ENCODE measurements at regions of chr16 and their contacts with region 1.

Region 1: GRCh38 chr16:9090960-9091866 is at the start of gene HAPSTR1:
- DNase-seq: peak; percentile 97 to 100 (median 100)
- H3K4me3 ChIP-seq: peak within 1 kb of the TSS; percentile 69 to 98
- H3K4me3 Mint-ChIP-seq: peak within 1 kb of the TSS; percentile 96 to 100 (median 99)
- H3K27ac ChIP-seq: peak within 1 kb of the TSS; percentile 93
- H3K27ac Mint-ChIP-seq: peak within 1 kb of the TSS; percentile 96 to 99 (median 98)
- H3K4me1 ChIP-seq: peaks cover 43% of the 10 kb centered on the region
- H3K4me1 Mint-ChIP-seq: peaks cover 30 to 53% (median 35%) of the 10 kb centered on the region in 4 donors
- H3K27me3 ChIP-seq: no peaks in the 10 kb centered on the region
- H3K27me3 Mint-ChIP-seq: no peaks in the 10 kb centered on the region
- total RNA-seq, gene HAPSTR1: 89.6 to 90.5 TPM

Region 2: DNA sequence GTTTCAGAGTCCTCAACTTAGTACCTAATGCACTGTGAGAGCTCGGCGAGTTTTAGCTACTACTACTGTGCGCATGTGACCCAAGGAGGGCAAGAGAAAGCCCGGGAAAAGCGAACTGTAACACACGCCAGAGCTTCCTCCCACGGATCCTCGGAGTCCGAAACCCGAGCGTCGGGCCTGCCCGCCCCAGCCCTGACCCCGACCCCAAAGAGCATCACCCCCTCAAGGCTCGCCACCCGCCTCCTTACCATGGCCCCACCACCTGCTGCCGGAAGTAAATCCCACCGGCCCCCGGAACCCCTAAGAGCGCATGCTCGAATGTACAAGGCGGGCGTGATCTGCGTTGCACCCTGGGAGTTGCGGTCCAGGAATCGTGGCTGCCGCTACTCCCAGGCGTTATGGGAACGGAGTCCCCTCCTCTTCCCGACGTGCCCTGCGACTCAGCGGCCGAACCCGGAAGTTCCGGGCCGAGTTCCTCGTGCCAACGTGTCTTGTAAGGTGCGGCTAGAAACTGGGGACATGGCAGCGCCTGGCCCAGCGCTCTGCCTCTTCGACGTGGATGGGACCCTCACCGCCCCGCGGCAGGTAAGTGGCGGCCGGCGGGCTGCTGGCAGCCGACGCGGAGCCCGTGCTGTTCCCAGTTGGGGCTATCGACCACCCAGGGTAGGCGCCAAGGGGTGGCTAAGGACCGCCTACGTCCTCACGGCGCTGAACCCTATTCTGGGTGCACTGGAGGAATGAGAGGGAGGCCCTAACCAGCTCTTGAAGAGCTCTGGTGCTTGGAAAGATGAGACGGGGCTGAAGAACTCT is 293.6 kb before region 1 on chr16 and contains the starts of genes PMM2 and TMEM186:
- CTCF ChIA-PET with region 1: no interaction called
- POLR2A ChIA-PET with region 1: interaction called, 14 read pairs
- intact Hi-C with region 1: loop called (anchors 1 kb)
- DNase-seq: peak; percentile 93 to 97 (median 94)
- H3K4me3 ChIP-seq: peak within 1 kb of the TSS; percentile 73 to 97
- H3K4me3 Mint-ChIP-seq: peak within 1 kb of the TSS; percentile 93 to 98 (median 95)
- H3K27ac ChIP-seq: peak within 1 kb of the TSS; percentile 81
- H3K27ac Mint-ChIP-seq: peak within 1 kb of the TSS; percentile 88 to 97 (median 94)
- H3K4me1 ChIP-seq: peaks cover 44% of the 10 kb centered on the region
- H3K4me1 Mint-ChIP-seq: peaks cover 24 to 55% (median 33%) of the 10 kb centered on the region in 4 donors
- H3K27me3 ChIP-seq: no peaks in the 10 kb centered on the region
- H3K27me3 Mint-ChIP-seq: no peaks in the 10 kb centered on the region
- total RNA-seq, gene PMM2: 51.7 to 61.7 TPM
- total RNA-seq, gene TMEM186: 15.6 to 17.9 TPM

Region 3: DNA sequence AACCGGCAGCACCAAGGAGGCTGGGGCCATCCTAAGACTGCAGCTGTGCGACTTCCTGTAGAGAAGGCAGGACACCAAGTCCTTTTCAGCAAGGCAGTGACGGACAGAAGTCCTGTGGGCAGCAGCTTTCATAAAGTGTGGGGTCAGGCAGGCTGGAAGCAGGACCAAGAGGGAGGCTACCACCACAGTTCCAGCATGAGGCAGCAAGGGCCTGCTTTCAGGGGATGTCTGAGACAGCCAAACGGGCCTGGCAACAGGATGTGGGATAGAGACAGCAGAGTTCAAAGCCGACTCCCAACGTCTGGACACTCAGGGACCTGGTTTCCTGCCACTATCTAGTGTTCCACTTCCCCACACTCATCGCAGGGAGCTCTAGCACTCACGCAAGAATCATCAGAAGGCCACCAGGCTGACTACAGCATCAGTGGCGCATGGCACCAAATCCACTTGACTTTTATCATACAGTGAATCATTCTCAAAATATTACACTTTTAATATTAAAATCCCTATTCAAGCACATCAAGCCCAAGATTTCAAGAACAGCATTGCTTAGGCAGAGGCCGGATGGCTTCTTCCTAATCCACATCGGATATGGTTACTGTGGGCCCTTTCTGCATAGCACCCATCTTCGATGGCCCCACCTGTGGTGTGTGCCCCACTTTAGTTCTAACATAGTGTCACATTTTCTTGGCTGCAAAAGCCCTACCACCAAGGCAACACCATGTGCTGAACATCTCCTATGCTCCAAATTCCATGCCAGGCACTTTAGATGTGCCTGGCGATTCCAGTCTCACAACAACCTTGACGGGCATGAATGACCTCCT is 132.7 kb before region 1 on chr16:
- CTCF ChIA-PET with region 1: no interaction called
- POLR2A ChIA-PET with region 1: interaction called, 21 read pairs
- intact Hi-C with region 1: no loop called
- DNase-seq: peak in 2 of 5 donors; percentile 32 to 59
- H3K4me3 ChIP-seq: peak overlapping the region; percentile 12 to 21
- H3K4me3 Mint-ChIP-seq: peak overlapping the region; percentile 71 to 98 (median 88)
- H3K27ac ChIP-seq: peak overlapping the region; percentile 53
- H3K27ac Mint-ChIP-seq: peak overlapping the region; percentile 72 to 97 (median 87)
- H3K4me1 ChIP-seq: peaks cover 83% of the 10 kb centered on the region
- H3K4me1 Mint-ChIP-seq: peaks cover 63 to 86% (median 74%) of the 10 kb centered on the region in 4 donors
- H3K27me3 ChIP-seq: no peaks in the 10 kb centered on the region
- H3K27me3 Mint-ChIP-seq: no peaks in the 10 kb centered on the region

Region 4: GRCh38 chr16:9077091-9077809 is 14.0 kb before region 1 on chr16:
- CTCF ChIA-PET with region 1: no interaction called
- POLR2A ChIA-PET with region 1: interaction called, 75 read pairs
- intact Hi-C with region 1: loop called (anchors 1 kb)
- DNase-seq: no peak
- H3K4me3 ChIP-seq: no peak overlapping the region
- H3K4me3 Mint-ChIP-seq: peak overlapping the region in 1 of 8 donors; percentile 6
- H3K27ac ChIP-seq: no peak overlapping the region
- H3K27ac Mint-ChIP-seq: peak overlapping the region in 2 of 7 donors; percentile 7 to 59
- H3K4me1 ChIP-seq: peaks cover 7% of the 10 kb centered on the region
- H3K4me1 Mint-ChIP-seq: peaks cover 11 to 22% (median 16%) of the 10 kb centered on the region in 4 donors
- H3K27me3 ChIP-seq: no peaks in the 10 kb centered on the region
- H3K27me3 Mint-ChIP-seq: peaks cover 1 to 3% of the 10 kb centered on the region in 2 donors

Region 5: DNA sequence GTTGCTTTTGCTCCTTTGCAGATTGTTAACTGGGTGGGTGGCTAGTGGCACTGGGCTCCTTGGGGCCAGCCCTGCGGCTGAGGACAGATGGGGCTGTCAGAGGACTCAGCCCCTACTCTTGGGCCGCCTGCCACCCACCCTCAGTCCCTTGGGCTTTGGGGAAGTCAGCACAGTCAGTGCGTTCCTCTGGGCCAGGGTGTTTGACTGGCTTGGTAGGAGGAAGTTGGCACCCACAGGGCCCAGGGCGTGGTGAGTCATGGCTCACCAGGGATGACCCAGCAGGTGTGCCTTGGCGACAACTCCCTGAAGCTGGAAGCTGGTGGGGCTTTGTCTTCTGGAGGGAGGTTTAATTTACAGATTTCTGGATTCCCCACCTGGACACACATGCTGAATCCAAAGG is 32.7 kb after region 1 on chr16:
- CTCF ChIA-PET with region 1: no interaction called
- POLR2A ChIA-PET with region 1: interaction called, 12 read pairs
- intact Hi-C with region 1: loop called (anchors 5 kb)
- DNase-seq: no peak
- H3K4me3 ChIP-seq: no peak overlapping the region
- H3K4me3 Mint-ChIP-seq: peak overlapping the region in 1 of 8 donors; percentile 15
- H3K27ac ChIP-seq: no peak overlapping the region
- H3K27ac Mint-ChIP-seq: peak overlapping the region in 3 of 7 donors; percentile 17 to 47 (median 30)
- H3K4me1 ChIP-seq: peaks cover 40% of the 10 kb centered on the region
- H3K4me1 Mint-ChIP-seq: peaks cover 36 to 84% (median 52%) of the 10 kb centered on the region in 4 donors
- H3K27me3 ChIP-seq: no peaks in the 10 kb centered on the region
- H3K27me3 Mint-ChIP-seq: no peaks in the 10 kb centered on the region

Region 6: GRCh38 chr16:10385725-10386516 is 1294.7 kb after region 1 on chr16 and contains the start of gene ATF7IP2:
- CTCF ChIA-PET with region 1: no interaction called
- POLR2A ChIA-PET with region 1: interaction called, 3 read pairs
- intact Hi-C with region 1: loop called (anchors 2 kb)
- DNase-seq: peak; percentile 81 to 89 (median 84)
- H3K4me3 ChIP-seq: peak within 1 kb of the TSS; percentile 63 to 76
- H3K4me3 Mint-ChIP-seq: peak within 1 kb of the TSS; percentile 92 to 99 (median 96)
- H3K27ac ChIP-seq: peak within 1 kb of the TSS; percentile 61
- H3K27ac Mint-ChIP-seq: peak within 1 kb of the TSS; percentile 90 to 98 (median 97)
- H3K4me1 ChIP-seq: peaks cover 42% of the 10 kb centered on the region
- H3K4me1 Mint-ChIP-seq: peaks cover 28 to 58% (median 41%) of the 10 kb centered on the region in 4 donors
- H3K27me3 ChIP-seq: no peaks in the 10 kb centered on the region
- H3K27me3 Mint-ChIP-seq: no peaks in the 10 kb centered on the region
- total RNA-seq, gene ATF7IP2: 51.1 to 58.0 TPM

Region 7: DNA sequence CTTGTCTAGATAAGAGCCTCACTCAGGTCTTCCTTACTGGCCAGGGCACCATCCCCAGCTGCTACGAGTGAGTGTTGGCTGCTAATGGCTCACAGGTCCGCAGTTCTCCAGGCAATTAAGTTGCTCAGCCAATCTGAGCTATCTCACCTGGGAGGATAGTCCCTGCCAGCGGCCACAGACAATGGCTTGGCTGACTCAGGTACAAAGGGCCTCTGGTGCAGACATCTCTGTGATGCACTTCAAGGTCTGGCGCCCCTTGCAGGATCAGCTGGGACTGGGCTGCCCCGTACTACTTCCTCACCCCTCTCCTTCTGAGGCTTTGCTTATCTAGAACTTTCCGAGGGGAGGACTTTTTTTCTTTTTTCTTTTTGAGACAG is 1538.4 kb after region 1 on chr16:
- CTCF ChIA-PET with region 1: no interaction called
- POLR2A ChIA-PET with region 1: no interaction called
- intact Hi-C with region 1: no loop called
- DNase-seq: no peak
- H3K4me3 ChIP-seq: no peak overlapping the region
- H3K4me3 Mint-ChIP-seq: no peak overlapping the region
- H3K27ac ChIP-seq: no peak overlapping the region
- H3K27ac Mint-ChIP-seq: no peak overlapping the region
- H3K4me1 ChIP-seq: no peaks in the 10 kb centered on the region
- H3K4me1 Mint-ChIP-seq: no peaks in the 10 kb centered on the region
- H3K27me3 ChIP-seq: no peaks in the 10 kb centered on the region
- H3K27me3 Mint-ChIP-seq: peaks cover 9 to 10% of the 10 kb centered on the region in 2 donors

Region 8: GRCh38 chr16:10944249-10945064 is 1853.2 kb after region 1 on chr16 and contains the start of gene CLEC16A:
- CTCF ChIA-PET with region 1: no interaction called
- POLR2A ChIA-PET with region 1: interaction called, 4 read pairs
- intact Hi-C with region 1: loop called (anchors 5 kb)
- DNase-seq: peak; percentile 94 to 97 (median 95)
- H3K4me3 ChIP-seq: peak within 1 kb of the TSS; percentile 81 to 89
- H3K4me3 Mint-ChIP-seq: peak within 1 kb of the TSS; percentile 83 to 96 (median 90)
- H3K27ac ChIP-seq: peak within 1 kb of the TSS; percentile 83
- H3K27ac Mint-ChIP-seq: peak within 1 kb of the TSS; percentile 66 to 94 (median 88)
- H3K4me1 ChIP-seq: peaks cover 74% of the 10 kb centered on the region
- H3K4me1 Mint-ChIP-seq: peaks cover 49 to 86% (median 67%) of the 10 kb centered on the region in 4 donors
- H3K27me3 ChIP-seq: no peaks in the 10 kb centered on the region
- H3K27me3 Mint-ChIP-seq: no peaks in the 10 kb centered on the region
- total RNA-seq, gene CLEC16A: 24.8 to 28.4 TPM